ENCODE measurements at regions of chr12 and their contacts with region 1.

Region 1: DNA sequence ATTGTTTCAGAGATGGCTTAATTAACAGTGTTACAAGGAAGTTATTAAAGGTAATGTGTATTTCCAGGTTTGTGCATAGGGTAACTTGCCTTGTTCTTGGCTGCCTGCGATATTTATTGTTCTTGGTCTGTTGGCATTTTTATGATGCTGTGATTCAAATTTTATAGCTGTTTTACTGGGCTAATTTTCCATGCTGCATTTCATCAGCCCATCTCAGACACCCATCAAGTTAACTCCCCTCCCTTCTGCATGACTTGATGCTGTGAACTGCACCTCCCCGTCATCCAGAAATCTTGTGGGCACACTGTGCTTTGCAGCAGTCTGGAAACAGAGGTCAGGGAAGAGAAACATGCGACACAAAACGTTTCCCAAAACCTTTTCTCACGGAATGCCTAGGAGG is 1049.2 kb downstream of the AACS start:
- DNase-seq: no peak
- H3K4me3 ChIP-seq: no peak overlapping the region
- H3K27ac ChIP-seq: no peak overlapping the region
- H3K4me1 ChIP-seq: no peaks in the 10 kb centered on the region
- H3K27me3 ChIP-seq: no peaks in the 10 kb centered on the region
- CTCF ChIP-seq: no peak
- POLR2A ChIP-seq: no peak

Region 2: GRCh38 chr12:126027816-126028215 is 86.6 kb before region 1 on chr12:
- intact Hi-C with region 1: no loop called
- DNase-seq: no peak
- H3K4me3 ChIP-seq: no peak overlapping the region
- H3K27ac ChIP-seq: no peak overlapping the region
- H3K4me1 ChIP-seq: no peaks in the 10 kb centered on the region
- H3K27me3 ChIP-seq: no peaks in the 10 kb centered on the region
- CTCF ChIP-seq: no peak
- POLR2A ChIP-seq: no peak

Region 3: GRCh38 chr12:126093908-126094307 is 20.5 kb before region 1 on chr12:
- intact Hi-C with region 1: loop called (anchors 1 kb)
- DNase-seq: no peak
- H3K4me3 ChIP-seq: no peak overlapping the region
- H3K27ac ChIP-seq: no peak overlapping the region
- H3K4me1 ChIP-seq: no peaks in the 10 kb centered on the region
- H3K27me3 ChIP-seq: no peaks in the 10 kb centered on the region
- CTCF ChIP-seq: no peak
- POLR2A ChIP-seq: no peak

Region 4: DNA sequence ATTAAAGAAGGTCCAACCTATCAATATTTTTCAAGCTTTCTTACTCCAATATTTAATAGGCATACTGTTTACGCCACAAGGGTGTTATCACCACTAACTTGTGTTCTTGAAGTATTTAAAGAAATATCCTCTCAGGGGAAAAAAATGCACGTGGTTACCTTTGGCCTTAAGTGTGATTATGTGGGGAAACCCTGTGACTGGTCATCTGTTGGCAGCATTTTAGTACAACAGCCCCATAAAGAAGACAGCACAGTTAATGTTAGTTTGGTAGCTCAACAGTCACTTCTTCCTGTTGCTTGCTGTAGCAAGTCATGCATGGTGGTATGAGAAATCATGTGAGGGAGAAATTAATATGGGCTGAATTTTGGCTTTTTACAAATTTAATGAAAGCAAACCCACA is 1131.0 kb after region 1 on chr12:
- intact Hi-C with region 1: no loop called
- DNase-seq: no peak
- H3K4me3 ChIP-seq: no peak overlapping the region
- H3K27ac ChIP-seq: no peak overlapping the region
- H3K4me1 ChIP-seq: no peaks in the 10 kb centered on the region
- H3K27me3 ChIP-seq: no peaks in the 10 kb centered on the region
- CTCF ChIP-seq: no peak
- POLR2A ChIP-seq: no peak

Region 5: DNA sequence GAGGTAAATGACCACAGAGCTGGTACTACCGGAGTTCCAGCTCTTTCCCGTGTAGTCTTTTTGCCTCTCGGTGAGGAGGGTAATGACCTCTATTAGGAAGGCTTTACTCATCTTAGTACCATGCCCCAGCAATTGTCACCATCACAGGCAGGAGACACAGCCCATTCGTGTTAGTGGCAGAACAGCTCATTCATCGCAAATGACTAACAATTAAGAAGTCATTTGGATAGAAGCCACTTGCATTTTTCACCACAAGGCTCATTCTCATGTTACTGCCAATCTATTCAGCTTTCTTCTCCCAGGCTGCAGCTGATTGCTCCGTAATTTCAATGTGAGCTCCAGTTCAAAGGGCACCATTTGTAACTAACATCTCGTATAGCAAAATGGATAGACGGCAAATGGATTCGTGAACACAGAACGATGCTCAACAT is 1433.7 kb after region 1 on chr12:
- intact Hi-C with region 1: no loop called
- DNase-seq: no peak
- H3K4me3 ChIP-seq: no peak overlapping the region
- H3K27ac ChIP-seq: no peak overlapping the region
- H3K4me1 ChIP-seq: no peaks in the 10 kb centered on the region
- H3K27me3 ChIP-seq: no peaks in the 10 kb centered on the region
- CTCF ChIP-seq: no peak
- POLR2A ChIP-seq: no peak